ENCODE measurements at regions of chr4 and their contacts with region 1.

Region 1: GRCh38 chr4:6250235-6250983 is 19.2 kb upstream of the WFS1 start:
- DNase-seq: peak; percentile 42
- ATAC-seq: peak; percentile 85
- H3K4me3 ChIP-seq: no peak overlapping the region
- H3K27ac ChIP-seq: no peak overlapping the region
- H3K4me1 ChIP-seq: no peaks in the 10 kb centered on the region
- H3K27me3 ChIP-seq: peaks cover 0 to 3% of the 10 kb centered on the region in 2 experiments; a peak in 2 of 4 replicates
- CTCF ChIP-seq: peak; percentile 70 to 81 (median 80); a peak in 5 of 6 replicates
- EP300 ChIP-seq: no peak
- POLR2A ChIP-seq: no peak
- RAD21 ChIP-seq: peak; percentile 91

Region 2: GRCh38 chr4:5611750-5612149 is 638.7 kb before region 1 on chr4:
- CTCF ChIA-PET with region 1: no interaction called
- POLR2A ChIA-PET with region 1: no interaction called
- RAD21 ChIA-PET with region 1: no interaction called
- SMC1A ChIA-PET with region 1: no interaction called
- in situ Hi-C with region 1: no loop called
- intact Hi-C with region 1: no loop called
- DNase-seq: no peak
- ATAC-seq: no peak
- H3K4me3 ChIP-seq: no peak overlapping the region
- H3K27ac ChIP-seq: no peak overlapping the region
- H3K4me1 ChIP-seq: no peaks in the 10 kb centered on the region
- H3K27me3 ChIP-seq: no peaks in the 10 kb centered on the region
- CTCF ChIP-seq: no peak
- EP300 ChIP-seq: no peak
- POLR2A ChIP-seq: no peak
- RAD21 ChIP-seq: no peak

Region 3: GRCh38 chr4:5798462-5798861 is 451.9 kb before region 1 on chr4:
- CTCF ChIA-PET with region 1: no interaction called
- POLR2A ChIA-PET with region 1: no interaction called
- RAD21 ChIA-PET with region 1: no interaction called
- SMC1A ChIA-PET with region 1: no interaction called
- in situ Hi-C with region 1: no loop called
- intact Hi-C with region 1: no loop called
- DNase-seq: no peak
- ATAC-seq: no peak
- H3K4me3 ChIP-seq: no peak overlapping the region
- H3K27ac ChIP-seq: no peak overlapping the region
- H3K4me1 ChIP-seq: no peaks in the 10 kb centered on the region
- H3K27me3 ChIP-seq: no peaks in the 10 kb centered on the region
- CTCF ChIP-seq: no peak
- EP300 ChIP-seq: no peak
- POLR2A ChIP-seq: no peak
- RAD21 ChIP-seq: no peak

Region 4: GRCh38 chr4:5933116-5933515 is 317.3 kb before region 1 on chr4:
- CTCF ChIA-PET with region 1: no interaction called
- POLR2A ChIA-PET with region 1: no interaction called
- RAD21 ChIA-PET with region 1: no interaction called
- SMC1A ChIA-PET with region 1: no interaction called
- in situ Hi-C with region 1: no loop called
- intact Hi-C with region 1: no loop called
- DNase-seq: no peak
- ATAC-seq: no peak
- H3K4me3 ChIP-seq: no peak overlapping the region
- H3K27ac ChIP-seq: no peak overlapping the region
- H3K4me1 ChIP-seq: no peaks in the 10 kb centered on the region
- H3K27me3 ChIP-seq: peaks cover 4 to 5% of the 10 kb centered on the region in 2 experiments; a peak in 3 of 4 replicates
- CTCF ChIP-seq: no peak
- EP300 ChIP-seq: no peak
- POLR2A ChIP-seq: no peak
- RAD21 ChIP-seq: no peak

Region 5: DNA sequence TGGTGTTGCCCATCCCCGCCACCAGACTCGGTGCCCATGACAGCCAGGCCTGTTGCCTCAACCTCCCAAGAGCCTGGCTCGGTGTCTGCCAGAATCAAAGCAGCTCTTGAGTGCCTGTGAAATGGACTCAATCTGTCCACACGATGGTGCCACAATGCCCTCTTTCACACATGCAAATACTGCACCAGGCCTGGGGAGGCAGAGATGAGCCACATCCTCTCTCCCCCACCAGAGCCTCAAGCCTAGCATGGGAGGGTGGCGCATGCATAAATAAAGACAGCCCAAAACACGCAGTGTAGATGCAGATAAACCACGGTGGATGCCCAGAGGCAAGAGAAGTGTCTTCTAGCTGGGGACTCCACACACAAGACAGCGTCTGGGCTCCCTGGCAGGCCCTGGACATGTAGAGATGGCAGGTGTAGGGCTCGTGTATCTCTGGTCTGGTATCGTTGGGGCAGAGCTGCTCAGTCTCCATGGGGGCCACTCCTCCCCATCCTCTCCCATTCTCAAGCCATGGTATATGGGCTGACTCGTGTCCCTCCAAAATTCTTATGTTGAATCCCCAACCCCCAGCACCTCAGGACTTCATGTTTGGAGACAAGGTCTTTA is 115.7 kb before region 1 on chr4:
- CTCF ChIA-PET with region 1: interaction called, 117 read pairs
- POLR2A ChIA-PET with region 1: no interaction called
- RAD21 ChIA-PET with region 1: interaction called, 21 read pairs
- SMC1A ChIA-PET with region 1: interaction called, 44 read pairs
- in situ Hi-C with region 1: no loop called
- intact Hi-C with region 1: loop called (anchors 1 kb)
- DNase-seq: peak; percentile 51
- ATAC-seq: peak; percentile 99
- H3K4me3 ChIP-seq: no peak overlapping the region
- H3K27ac ChIP-seq: no peak overlapping the region
- H3K4me1 ChIP-seq: peaks cover 7% of the 10 kb centered on the region; the same call in 1 of the 2 replicates
- H3K27me3 ChIP-seq: no peaks in the 10 kb centered on the region
- CTCF ChIP-seq: peak; percentile 72 to 96 (median 73)
- EP300 ChIP-seq: no peak
- POLR2A ChIP-seq: no peak
- RAD21 ChIP-seq: peak; percentile 78

Region 6: DNA sequence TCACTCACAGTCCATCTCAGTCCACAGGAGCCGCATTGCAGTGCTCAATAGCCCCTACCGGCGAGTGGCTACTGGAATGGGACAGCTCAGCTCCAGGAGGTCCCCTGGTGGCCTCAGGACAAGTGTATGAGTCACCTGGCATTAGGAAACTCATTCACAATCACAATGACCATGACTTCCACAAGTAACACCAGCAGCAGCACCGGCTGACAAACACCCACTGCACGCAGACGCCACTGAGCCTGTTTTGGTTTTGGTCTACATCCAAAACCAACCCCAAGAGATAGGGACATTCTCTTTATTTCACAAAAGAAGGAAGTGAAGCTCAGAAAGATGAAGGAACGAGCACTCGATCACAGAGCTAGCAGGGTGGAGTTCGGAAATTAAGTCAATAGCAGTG is 58.2 kb before region 1 on chr4:
- CTCF ChIA-PET with region 1: interaction called, 14 read pairs
- POLR2A ChIA-PET with region 1: no interaction called
- RAD21 ChIA-PET with region 1: no interaction called
- SMC1A ChIA-PET with region 1: interaction called, 5 read pairs
- in situ Hi-C with region 1: no loop called
- intact Hi-C with region 1: no loop called
- DNase-seq: no peak
- ATAC-seq: peak; percentile 37
- H3K4me3 ChIP-seq: no peak overlapping the region
- H3K27ac ChIP-seq: peak overlapping the region; percentile 50
- H3K4me1 ChIP-seq: peaks cover 30% of the 10 kb centered on the region
- H3K27me3 ChIP-seq: no peaks in the 10 kb centered on the region
- CTCF ChIP-seq: peak in 1 of 3 experiments; percentile 19; a peak in 1 of 6 replicates
- EP300 ChIP-seq: peak; percentile 39 to 53; a peak in 2 of 4 replicates
- POLR2A ChIP-seq: no peak
- RAD21 ChIP-seq: no peak

Region 7: GRCh38 chr4:6221851-6222760 is 28.3 kb before region 1 on chr4:
- CTCF ChIA-PET with region 1: interaction called, 34 read pairs
- POLR2A ChIA-PET with region 1: no interaction called
- RAD21 ChIA-PET with region 1: interaction called, 3 read pairs
- SMC1A ChIA-PET with region 1: interaction called, 20 read pairs
- in situ Hi-C with region 1: no loop called
- intact Hi-C with region 1: no loop called
- DNase-seq: no peak
- ATAC-seq: peak; percentile 57
- H3K4me3 ChIP-seq: 0 out of 2 replicates have a peak overlapping the region, but pooled peaks have one; percentile 27
- H3K27ac ChIP-seq: no peak overlapping the region
- H3K4me1 ChIP-seq: peaks cover 16% of the 10 kb centered on the region
- H3K27me3 ChIP-seq: no peaks in the 10 kb centered on the region; a peak in 2 of 4 replicates
- CTCF ChIP-seq: no peak
- EP300 ChIP-seq: no peak
- POLR2A ChIP-seq: no peak
- RAD21 ChIP-seq: no peak

Region 8: GRCh38 chr4:6278801-6279197 is 28.4 kb after region 1 on chr4:
- CTCF ChIA-PET with region 1: interaction called, 6 read pairs
- POLR2A ChIA-PET with region 1: no interaction called
- RAD21 ChIA-PET with region 1: interaction called, 3 read pairs
- SMC1A ChIA-PET with region 1: interaction called, 15 read pairs
- in situ Hi-C with region 1: no loop called
- intact Hi-C with region 1: no loop called
- DNase-seq: peak; percentile 42
- ATAC-seq: peak; percentile 94
- H3K4me3 ChIP-seq: no peak overlapping the region
- H3K27ac ChIP-seq: no peak overlapping the region
- H3K4me1 ChIP-seq: peaks cover 15% of the 10 kb centered on the region
- H3K27me3 ChIP-seq: no peaks in the 10 kb centered on the region; a peak in 1 of 4 replicates
- CTCF ChIP-seq: no peak
- EP300 ChIP-seq: peak in 1 of 2 experiments; percentile 39; a peak in 2 of 4 replicates
- POLR2A ChIP-seq: no peak
- RAD21 ChIP-seq: no peak

Region 9: DNA sequence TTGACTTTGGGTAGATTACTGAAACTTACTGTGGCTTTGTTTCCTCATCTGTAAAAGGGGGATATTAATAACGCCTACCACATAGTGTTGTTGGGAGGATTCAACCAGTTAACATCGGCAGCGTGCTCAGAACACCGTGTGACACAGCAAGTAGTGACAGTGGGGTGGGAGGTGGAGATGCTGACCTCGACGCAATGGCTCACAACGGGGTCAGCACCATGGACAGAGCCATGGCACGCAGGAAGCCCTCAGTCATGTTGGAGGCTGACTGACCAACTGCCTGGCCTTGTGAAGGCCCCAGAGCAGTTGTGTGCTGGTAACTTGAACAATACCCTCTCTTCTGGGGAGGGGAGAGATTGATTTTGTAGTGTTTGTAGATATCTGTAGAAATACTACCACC is 112.5 kb after region 1 on chr4:
- CTCF ChIA-PET with region 1: no interaction called
- POLR2A ChIA-PET with region 1: no interaction called
- RAD21 ChIA-PET with region 1: no interaction called
- SMC1A ChIA-PET with region 1: no interaction called
- in situ Hi-C with region 1: no loop called
- intact Hi-C with region 1: no loop called
- DNase-seq: no peak
- ATAC-seq: peak; percentile 41; the same call in 1 of the 3 replicates
- H3K4me3 ChIP-seq: no peak overlapping the region
- H3K27ac ChIP-seq: no peak overlapping the region
- H3K4me1 ChIP-seq: no peaks in the 10 kb centered on the region
- H3K27me3 ChIP-seq: no peaks in the 10 kb centered on the region; a peak in 2 of 4 replicates
- CTCF ChIP-seq: no peak
- EP300 ChIP-seq: no peak
- POLR2A ChIP-seq: no peak
- RAD21 ChIP-seq: no peak

Region 10: GRCh38 chr4:6546681-6547447 is 296.5 kb after region 1 on chr4:
- CTCF ChIA-PET with region 1: interaction called, 11 read pairs
- POLR2A ChIA-PET with region 1: no interaction called
- RAD21 ChIA-PET with region 1: no interaction called
- SMC1A ChIA-PET with region 1: no interaction called
- in situ Hi-C with region 1: loop called (anchors 5 kb)
- intact Hi-C with region 1: loop called (anchors 5 kb)
- DNase-seq: no peak
- ATAC-seq: peak; percentile 83
- H3K4me3 ChIP-seq: no peak overlapping the region
- H3K27ac ChIP-seq: no peak overlapping the region
- H3K4me1 ChIP-seq: no peaks in the 10 kb centered on the region
- H3K27me3 ChIP-seq: no peaks in the 10 kb centered on the region
- CTCF ChIP-seq: peak; percentile 86 to 87 (median 87)
- EP300 ChIP-seq: no peak
- POLR2A ChIP-seq: no peak
- RAD21 ChIP-seq: peak; percentile 62